Heart right ventricle (tissue), 16 donors: ENCODE measurements at regions of chr19 and their contacts with region 1.

Region 1: GRCh38 chr19:9934132-9934950 is 2.0 kb downstream of the OLFM2 start:
- DNase-seq: peak; percentile 59 to 80
- ATAC-seq: peak; percentile 65 to 87 (median 76)
- H3K4me3 ChIP-seq: no peak overlapping the region
- H3K27ac ChIP-seq: no peak overlapping the region
- H3K4me1 ChIP-seq: peaks cover 4 to 39% (median 17%) of the 10 kb centered on the region in 9 donors
- H3K27me3 ChIP-seq: peaks cover 0 to 77% (median 68%) of the 10 kb centered on the region in 7 donors
- CTCF ChIP-seq: peak; percentile 69 to 88 (median 80)

Region 2: DNA sequence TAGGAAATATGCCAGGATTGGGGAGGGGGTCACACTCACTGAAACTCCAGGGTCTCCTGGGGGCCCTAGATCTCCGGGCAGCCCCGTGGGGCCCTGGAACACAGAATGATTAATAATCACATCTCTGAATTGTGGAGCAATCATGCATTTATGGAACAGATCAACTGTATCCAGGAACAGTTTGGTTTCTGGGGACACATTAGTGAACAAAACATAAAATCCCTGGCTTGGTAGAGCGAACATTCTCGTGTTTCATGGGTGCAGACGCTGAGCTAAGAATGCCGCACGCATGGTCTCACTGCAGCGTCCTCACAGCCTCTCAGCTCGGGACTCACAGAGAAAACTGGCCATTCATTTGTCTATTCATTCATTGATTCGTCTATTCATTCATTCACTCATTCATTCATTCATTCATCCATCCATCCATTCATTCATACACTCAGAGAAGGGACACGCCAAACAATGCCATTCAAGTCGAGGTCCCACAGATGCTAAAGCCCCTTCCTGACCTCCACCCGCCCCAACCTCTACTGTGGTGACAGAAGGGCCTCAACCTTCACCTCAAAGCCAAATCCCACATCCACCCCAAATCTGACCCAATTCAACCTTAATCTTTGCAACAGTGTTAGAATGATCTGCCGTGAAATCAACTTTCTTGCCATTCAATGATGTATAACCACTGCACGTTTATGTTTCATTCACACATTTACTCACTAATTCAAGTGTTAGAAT is 37.0 kb after region 1 on chr19:
- intact Hi-C with region 1: no loop called
- DNase-seq: no peak
- ATAC-seq: no peak
- H3K4me3 ChIP-seq: no peak overlapping the region
- H3K27ac ChIP-seq: no peak overlapping the region
- H3K4me1 ChIP-seq: no peaks in the 10 kb centered on the region
- H3K27me3 ChIP-seq: peaks cover 0 to 30% (median 20%) of the 10 kb centered on the region in 7 donors
- CTCF ChIP-seq: no peak

Region 3: GRCh38 chr19:10000171-10000826 is 66.0 kb after region 1 on chr19:
- intact Hi-C with region 1: loop called in 1 of 10 experiments (anchors 2 kb)
- DNase-seq: peak; percentile 47 to 51
- ATAC-seq: peak in 2 of 8 donors; percentile 19 to 25
- H3K4me3 ChIP-seq: no peak overlapping the region
- H3K27ac ChIP-seq: peak overlapping the region in 2 of 10 donors; percentile 33 to 44
- H3K4me1 ChIP-seq: peaks cover 0 to 28% (median 0%) of the 10 kb centered on the region in 9 donors
- H3K27me3 ChIP-seq: peaks cover 0 to 30% (median 10%) of the 10 kb centered on the region in 7 donors
- CTCF ChIP-seq: peak; percentile 32 to 76 (median 66)

Region 4: DNA sequence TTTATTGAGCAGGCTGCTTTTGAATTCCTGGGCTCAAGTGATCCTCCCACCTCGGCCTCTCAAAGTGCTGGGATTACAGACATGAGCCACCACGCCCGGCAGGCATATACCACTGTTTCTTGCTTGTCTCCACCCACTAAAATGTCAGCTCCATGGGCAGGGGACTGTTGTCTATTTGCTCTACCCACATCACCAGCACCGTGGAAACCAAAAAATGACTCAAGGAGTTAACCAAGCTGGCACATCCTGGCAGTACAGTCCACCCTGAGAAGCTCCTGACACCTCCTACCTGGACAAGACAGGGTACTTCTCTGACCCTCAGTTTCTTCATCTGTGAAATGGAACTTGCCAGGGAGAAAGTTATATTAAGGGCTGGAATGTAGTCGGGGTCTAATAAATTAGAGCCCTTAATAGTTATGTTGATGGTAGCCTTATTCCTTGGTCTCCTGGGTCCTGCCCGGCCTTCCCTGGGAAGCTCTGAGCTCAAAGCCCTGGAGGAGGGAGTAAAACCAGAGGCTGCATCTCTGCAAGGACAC is 92.9 kb after region 1 on chr19:
- intact Hi-C with region 1: loop called (anchors 1 to 5 kb)
- DNase-seq: no peak
- ATAC-seq: peak in 5 of 8 donors; percentile 2 to 11 (median 6)
- H3K4me3 ChIP-seq: peak overlapping the region in 1 of 10 donors; percentile 7
- H3K27ac ChIP-seq: peak overlapping the region in 2 of 10 donors; percentile 8 to 22
- H3K4me1 ChIP-seq: peaks cover 0 to 10% (median 8%) of the 10 kb centered on the region in 9 donors
- H3K27me3 ChIP-seq: peaks cover 0 to 32% (median 18%) of the 10 kb centered on the region in 7 donors
- CTCF ChIP-seq: no peak

Region 5: GRCh38 chr19:10112895-10113591 is 178.7 kb after region 1 on chr19:
- intact Hi-C with region 1: loop called in 2 of 10 experiments (anchors 5 to 10 kb)
- DNase-seq: peak in 1 of 2 donors; percentile 58
- ATAC-seq: peak; percentile 2 to 55 (median 24)
- H3K4me3 ChIP-seq: peak overlapping the region in 1 of 10 donors; percentile 37
- H3K27ac ChIP-seq: peak overlapping the region in 2 of 10 donors; percentile 35 to 78
- H3K4me1 ChIP-seq: peaks cover 0 to 40% (median 5%) of the 10 kb centered on the region in 9 donors
- H3K27me3 ChIP-seq: no peaks in the 10 kb centered on the region
- CTCF ChIP-seq: peak in 8 of 9 donors; percentile 14 to 68 (median 53)

Region 6: DNA sequence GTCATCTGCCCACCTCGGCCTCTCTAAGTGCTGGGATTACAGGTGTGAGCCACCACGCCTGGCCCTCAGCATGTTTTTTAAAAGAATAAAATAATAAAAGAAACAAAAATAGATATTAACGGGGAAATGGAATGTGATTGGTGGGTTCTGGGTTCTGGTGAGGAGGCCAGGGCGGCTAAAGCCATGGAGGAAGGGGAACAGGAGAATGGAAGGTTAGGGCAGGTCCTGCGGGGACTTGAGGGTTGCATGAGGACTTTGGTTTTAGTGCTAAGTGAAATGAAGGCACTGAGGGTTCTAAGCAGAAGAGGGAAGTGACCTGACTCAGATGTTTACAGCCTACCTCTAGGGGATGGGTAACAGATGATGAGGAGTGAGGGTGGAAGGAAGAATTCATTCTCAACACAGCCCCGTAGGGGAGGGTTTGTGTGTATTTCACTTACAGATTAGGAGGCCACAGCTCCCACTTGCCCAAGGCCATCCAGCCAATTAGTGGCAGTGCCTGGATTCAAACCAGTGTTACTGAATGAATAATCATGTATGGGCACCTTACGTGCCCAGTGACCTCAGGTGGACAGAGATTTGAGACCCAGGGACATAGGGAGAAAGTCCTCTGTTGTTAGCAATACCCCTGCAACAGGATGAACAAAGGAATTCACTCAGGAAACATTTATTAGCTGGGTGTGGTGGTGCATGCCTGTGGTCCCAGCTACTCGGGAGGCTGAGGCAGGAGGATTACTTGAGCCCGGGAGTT is 311.0 kb after region 1 on chr19:
- intact Hi-C with region 1: loop called in 6 of 10 experiments (anchors 2 to 10 kb)
- DNase-seq: no peak
- ATAC-seq: no peak
- H3K4me3 ChIP-seq: no peak overlapping the region
- H3K27ac ChIP-seq: no peak overlapping the region
- H3K4me1 ChIP-seq: peaks cover 0 to 7% (median 4%) of the 10 kb centered on the region in 9 donors
- H3K27me3 ChIP-seq: no peaks in the 10 kb centered on the region
- CTCF ChIP-seq: no peak

Region 7: GRCh38 chr19:10251792-10252694 is 317.7 kb after region 1 on chr19 and contains the start of gene MRPL4:
- intact Hi-C with region 1: loop called in 6 of 10 experiments (anchors 2 to 10 kb)
- DNase-seq: peak; percentile 91 to 98
- ATAC-seq: peak; percentile 94 to 97 (median 96)
- H3K4me3 ChIP-seq: peak within 1 kb of the TSS; percentile 47 to 99 (median 82)
- H3K27ac ChIP-seq: peak within 1 kb of the TSS; percentile 44 to 95 (median 88)
- H3K4me1 ChIP-seq: peaks cover 0 to 32% (median 14%) of the 10 kb centered on the region in 9 donors
- H3K27me3 ChIP-seq: no peaks in the 10 kb centered on the region
- CTCF ChIP-seq: no peak
- total RNA-seq, gene MRPL4: 53.2 to 94.3 (median 69.0) TPM

Region 8: GRCh38 chr19:10388957-10389356 is 454.6 kb after region 1 on chr19:
- intact Hi-C with region 1: loop called in 4 of 10 experiments (anchors 5 to 10 kb)
- DNase-seq: peak; percentile 87 to 92
- ATAC-seq: peak; percentile 46 to 76 (median 70)
- H3K4me3 ChIP-seq: no peak overlapping the region
- H3K27ac ChIP-seq: no peak overlapping the region
- H3K4me1 ChIP-seq: peaks cover 0 to 28% (median 5%) of the 10 kb centered on the region in 9 donors
- H3K27me3 ChIP-seq: no peaks in the 10 kb centered on the region
- CTCF ChIP-seq: peak; percentile 90 to 96 (median 94)